ENCODE measurements at regions of chr21 and their contacts with region 1.

Region 1: DNA sequence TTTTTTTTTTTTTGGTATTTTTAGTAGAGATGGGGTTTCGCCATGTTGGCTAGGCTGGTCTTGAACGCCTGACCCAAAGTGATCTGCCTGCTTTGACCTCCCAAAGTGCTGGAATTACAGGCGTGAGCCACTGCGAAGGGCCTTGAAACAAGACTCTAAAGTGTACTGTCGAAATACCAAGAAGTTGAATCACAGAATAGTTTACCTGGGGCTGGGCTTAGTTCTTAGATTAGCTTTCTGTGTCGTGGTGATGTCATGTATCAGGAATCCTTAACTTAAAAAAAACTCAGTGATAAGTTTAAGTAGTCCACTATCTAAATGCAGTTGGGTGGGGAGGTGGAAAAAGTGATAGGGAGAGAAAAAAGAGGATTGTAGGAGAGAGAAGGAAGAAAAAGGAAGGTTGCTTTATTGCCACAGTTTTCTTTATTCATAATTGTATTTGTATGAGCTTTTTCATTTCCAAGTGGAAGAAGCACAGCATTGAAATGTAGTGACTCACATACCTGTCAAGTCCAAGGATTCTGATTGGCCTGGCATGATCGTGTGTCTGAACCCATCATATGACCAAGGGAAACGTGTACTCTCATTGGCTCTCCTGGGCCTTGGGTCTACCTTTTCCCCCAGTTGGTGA is 13.4 kb downstream of the ITSN1 start:
- DNase-seq: peak; percentile 77 to 87
- H3K4me3 ChIP-seq: no peak overlapping the region
- H3K4me3 Mint-ChIP-seq: peak overlapping the region; percentile 61
- H3K27ac Mint-ChIP-seq: peak overlapping the region; percentile 91
- H3K4me1 ChIP-seq: peaks cover 68% of the 10 kb centered on the region
- H3K4me1 Mint-ChIP-seq: peaks cover 41% of the 10 kb centered on the region
- H3K27me3 ChIP-seq: no peaks in the 10 kb centered on the region
- H3K27me3 Mint-ChIP-seq: no peaks in the 10 kb centered on the region
- CTCF ChIP-seq: no peak

Region 2: DNA sequence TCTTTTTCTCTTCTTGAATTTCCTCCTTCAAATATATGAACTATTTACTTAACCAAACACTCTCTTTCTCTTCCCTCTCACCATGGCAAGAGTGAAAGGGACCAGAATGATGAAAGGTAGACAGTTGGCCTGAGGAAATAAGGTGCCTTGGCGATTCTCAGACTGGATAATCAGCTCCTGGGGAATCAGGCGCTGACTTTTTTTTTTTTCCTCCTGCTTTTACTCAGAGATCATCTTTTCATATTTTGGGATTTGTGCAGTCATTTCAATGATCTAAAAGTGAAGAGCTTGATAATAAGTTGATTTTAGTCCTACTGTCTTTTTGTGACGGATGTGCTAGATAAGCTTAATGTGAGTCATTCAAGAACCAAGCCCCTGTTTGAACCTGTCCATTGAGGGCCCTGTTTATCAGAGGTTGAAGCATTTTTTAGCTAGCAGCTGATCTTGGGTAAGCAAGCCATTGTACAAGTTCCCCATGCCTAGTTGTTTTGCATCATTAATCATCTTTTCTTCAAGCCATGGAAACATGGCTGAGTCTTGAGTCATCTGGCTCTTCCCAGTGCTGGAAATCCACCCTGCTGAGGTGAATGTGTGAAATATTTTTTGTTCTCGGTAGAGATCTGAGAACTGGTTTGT is 27.4 kb after region 1 on chr21:
- CTCF ChIA-PET with region 1: interaction called, 5 read pairs
- POLR2A ChIA-PET with region 1: interaction called, 7 read pairs
- intact Hi-C with region 1: loop called (anchors 2 kb)
- DNase-seq: peak; percentile 56 to 60
- H3K4me3 ChIP-seq: no peak overlapping the region
- H3K4me3 Mint-ChIP-seq: peak overlapping the region; percentile 52
- H3K27ac Mint-ChIP-seq: peak overlapping the region; percentile 86
- H3K4me1 ChIP-seq: peaks cover 73% of the 10 kb centered on the region
- H3K4me1 Mint-ChIP-seq: peaks cover 55% of the 10 kb centered on the region
- H3K27me3 ChIP-seq: no peaks in the 10 kb centered on the region
- H3K27me3 Mint-ChIP-seq: no peaks in the 10 kb centered on the region
- CTCF ChIP-seq: no peak

Region 3: DNA sequence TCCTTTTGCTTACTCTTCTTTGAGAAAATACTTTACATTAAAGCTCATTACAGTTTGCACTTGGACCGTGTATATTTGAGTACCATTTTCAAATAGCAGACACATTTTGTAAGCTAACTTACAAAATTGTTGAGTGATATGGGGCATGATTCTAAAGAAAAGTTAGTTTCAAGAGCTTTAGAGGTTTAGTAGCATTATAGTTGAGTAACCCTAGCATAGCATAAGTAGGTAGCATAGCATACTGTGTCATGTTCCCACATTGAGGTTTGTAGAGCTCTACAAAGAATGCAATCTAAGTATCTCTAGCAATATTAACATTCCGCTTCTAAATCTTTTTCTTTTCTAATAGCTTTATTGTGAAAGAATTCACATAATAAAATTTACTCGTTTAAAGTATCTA is 78.6 kb after region 1 on chr21:
- CTCF ChIA-PET with region 1: no interaction called
- POLR2A ChIA-PET with region 1: interaction called, 3 read pairs
- intact Hi-C with region 1: loop called (anchors 10 kb)
- DNase-seq: no peak
- H3K4me3 ChIP-seq: no peak overlapping the region
- H3K4me3 Mint-ChIP-seq: no peak overlapping the region
- H3K27ac Mint-ChIP-seq: no peak overlapping the region
- H3K4me1 ChIP-seq: peaks cover 68% of the 10 kb centered on the region
- H3K4me1 Mint-ChIP-seq: peaks cover 21% of the 10 kb centered on the region
- H3K27me3 ChIP-seq: no peaks in the 10 kb centered on the region
- H3K27me3 Mint-ChIP-seq: no peaks in the 10 kb centered on the region
- CTCF ChIP-seq: no peak